ENCODE measurements at regions of chr9 and their contacts with region 1.

Region 1: DNA sequence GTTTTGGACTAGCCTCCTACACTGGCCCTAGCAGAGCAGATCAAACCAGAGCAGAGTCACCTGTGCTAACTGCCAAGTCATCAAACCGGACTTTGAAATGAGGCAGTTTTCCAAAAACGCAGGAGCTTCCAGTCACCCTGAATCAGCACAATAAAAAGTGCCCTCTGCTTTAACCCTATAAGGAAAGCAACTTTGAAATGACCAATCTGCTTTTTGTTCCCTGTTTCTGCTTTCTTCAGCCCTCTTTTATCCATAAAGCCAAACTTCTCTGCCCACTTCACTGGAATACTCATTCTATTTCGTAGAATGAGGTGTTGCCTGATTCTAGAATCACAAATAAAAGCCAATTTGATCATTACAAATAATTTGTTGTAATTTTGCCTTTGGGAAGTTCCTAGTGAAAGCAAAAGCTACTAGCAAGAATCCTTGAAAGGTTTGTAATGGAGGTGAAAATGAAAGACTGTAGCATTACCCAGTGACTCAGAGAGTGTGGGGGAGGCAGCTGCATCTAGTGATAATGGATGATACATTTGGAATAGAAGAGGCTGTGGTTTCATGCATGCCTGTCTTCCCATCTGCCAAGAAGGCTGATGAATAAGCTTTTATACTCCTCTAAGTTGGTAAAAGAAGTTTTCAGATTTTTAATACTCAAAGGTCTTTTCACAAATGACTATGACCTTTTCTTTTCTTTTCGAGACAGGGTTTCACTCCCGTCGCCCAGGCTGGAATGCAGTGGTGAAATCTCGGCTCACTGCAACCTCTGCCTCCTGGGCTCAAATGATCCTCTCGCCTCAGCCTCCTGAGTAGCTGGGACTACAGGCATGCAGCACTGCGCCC is 14.9 kb downstream of the SPAAR start:
- DNase-seq: no peak
- ATAC-seq: peak; percentile 42 to 62
- H3K4me3 ChIP-seq: no peak overlapping the region
- H3K27ac ChIP-seq: peak overlapping the region; percentile 18 to 62 (median 62)
- H3K4me1 ChIP-seq: peaks cover 0 to 24% of the 10 kb centered on the region in 2 donors
- H3K27me3 ChIP-seq: no peaks in the 10 kb centered on the region
- CTCF ChIP-seq: no peak
- POLR2A ChIP-seq: no peak

Region 2: DNA sequence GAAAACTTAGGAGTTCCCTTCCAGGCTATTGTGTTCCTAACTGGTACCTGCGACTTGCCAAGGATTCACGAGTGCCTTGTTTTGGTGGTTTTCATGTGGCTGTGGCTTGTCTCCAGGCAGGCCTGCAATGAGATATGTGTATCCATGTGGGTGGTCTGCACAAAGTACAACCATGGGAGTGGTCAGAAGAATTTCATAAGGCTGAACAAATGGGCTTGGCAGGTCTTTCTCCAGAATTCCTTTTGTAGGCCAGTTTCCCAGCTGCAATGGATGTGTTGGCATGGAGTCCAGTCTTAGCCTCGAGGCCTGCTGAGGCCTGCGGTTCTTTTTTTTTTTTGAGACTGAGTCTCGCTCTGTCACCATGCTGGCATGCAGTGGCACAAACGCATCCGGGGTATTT is 619.8 kb after region 1 on chr9:
- in situ Hi-C with region 1: no loop called
- intact Hi-C with region 1: loop called (anchors 10 kb)
- DNase-seq: peak; percentile 19 to 50
- ATAC-seq: peak; percentile 80 to 83
- H3K4me3 ChIP-seq: no peak overlapping the region
- H3K27ac ChIP-seq: no peak overlapping the region
- H3K4me1 ChIP-seq: no peaks in the 10 kb centered on the region
- H3K27me3 ChIP-seq: no peaks in the 10 kb centered on the region
- CTCF ChIP-seq: no peak
- POLR2A ChIP-seq: no peak

Measured in gastrocnemius medialis (tissue), 4 donors.